ENCODE measurements at regions of chr6 and their contacts with region 1.

Region 1: GRCh38 chr6:47097092-47097945 is 55.2 kb upstream of the ADGRF1 start:
- DNase-seq: peak; percentile 50 to 58
- ATAC-seq: peak; percentile 78 to 93
- H3K4me3 ChIP-seq: no peak overlapping the region
- H3K27ac ChIP-seq: peak overlapping the region in 1 of 4 donors; percentile 40
- H3K4me1 ChIP-seq: no peaks in the 10 kb centered on the region
- H3K27me3 ChIP-seq: no peaks in the 10 kb centered on the region
- CTCF ChIP-seq: peak; percentile 52 to 65 (median 56)
- POLR2A ChIP-seq: no peak

Region 2: GRCh38 chr6:47146428-47147174 is 49.3 kb after region 1 on chr6:
- in situ Hi-C with region 1: no loop called
- intact Hi-C with region 1: no loop called
- DNase-seq: no peak
- ATAC-seq: peak; percentile 28 to 39
- H3K4me3 ChIP-seq: no peak overlapping the region
- H3K27ac ChIP-seq: peak overlapping the region in 2 of 4 donors; percentile 34 to 41
- H3K4me1 ChIP-seq: no peaks in the 10 kb centered on the region
- H3K27me3 ChIP-seq: no peaks in the 10 kb centered on the region
- CTCF ChIP-seq: no peak
- POLR2A ChIP-seq: no peak

Region 3: DNA sequence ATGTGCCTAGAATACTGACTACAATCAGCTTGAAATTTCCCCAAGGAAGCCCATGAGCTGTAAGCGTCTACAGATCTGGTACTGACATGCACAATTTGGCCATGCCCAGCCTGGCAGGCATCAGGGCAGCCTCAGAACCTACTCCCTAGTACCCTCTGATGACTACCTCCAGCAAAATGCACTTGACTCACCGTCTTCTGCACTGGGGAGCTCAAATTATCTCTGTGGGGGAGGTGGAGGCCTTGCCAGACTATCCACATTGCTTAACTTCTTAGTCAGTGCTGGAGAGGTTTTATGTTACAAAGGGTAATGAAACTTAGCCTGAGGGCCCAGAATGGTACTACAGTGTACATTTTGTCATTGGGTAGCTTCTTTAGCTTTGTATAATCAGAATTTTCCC is 70.9 kb after region 1 on chr6:
- in situ Hi-C with region 1: no loop called
- intact Hi-C with region 1: loop called (anchors 2 kb)
- DNase-seq: peak; percentile 70 to 88
- ATAC-seq: peak; percentile 98 to 99
- H3K4me3 ChIP-seq: no peak overlapping the region
- H3K27ac ChIP-seq: peak overlapping the region in 3 of 4 donors; percentile 58 to 72 (median 61)
- H3K4me1 ChIP-seq: peaks cover 7 to 15% of the 10 kb centered on the region in 2 donors
- H3K27me3 ChIP-seq: no peaks in the 10 kb centered on the region
- CTCF ChIP-seq: peak in 1 of 5 experiments; percentile 22
- POLR2A ChIP-seq: no peak

Region 4: DNA sequence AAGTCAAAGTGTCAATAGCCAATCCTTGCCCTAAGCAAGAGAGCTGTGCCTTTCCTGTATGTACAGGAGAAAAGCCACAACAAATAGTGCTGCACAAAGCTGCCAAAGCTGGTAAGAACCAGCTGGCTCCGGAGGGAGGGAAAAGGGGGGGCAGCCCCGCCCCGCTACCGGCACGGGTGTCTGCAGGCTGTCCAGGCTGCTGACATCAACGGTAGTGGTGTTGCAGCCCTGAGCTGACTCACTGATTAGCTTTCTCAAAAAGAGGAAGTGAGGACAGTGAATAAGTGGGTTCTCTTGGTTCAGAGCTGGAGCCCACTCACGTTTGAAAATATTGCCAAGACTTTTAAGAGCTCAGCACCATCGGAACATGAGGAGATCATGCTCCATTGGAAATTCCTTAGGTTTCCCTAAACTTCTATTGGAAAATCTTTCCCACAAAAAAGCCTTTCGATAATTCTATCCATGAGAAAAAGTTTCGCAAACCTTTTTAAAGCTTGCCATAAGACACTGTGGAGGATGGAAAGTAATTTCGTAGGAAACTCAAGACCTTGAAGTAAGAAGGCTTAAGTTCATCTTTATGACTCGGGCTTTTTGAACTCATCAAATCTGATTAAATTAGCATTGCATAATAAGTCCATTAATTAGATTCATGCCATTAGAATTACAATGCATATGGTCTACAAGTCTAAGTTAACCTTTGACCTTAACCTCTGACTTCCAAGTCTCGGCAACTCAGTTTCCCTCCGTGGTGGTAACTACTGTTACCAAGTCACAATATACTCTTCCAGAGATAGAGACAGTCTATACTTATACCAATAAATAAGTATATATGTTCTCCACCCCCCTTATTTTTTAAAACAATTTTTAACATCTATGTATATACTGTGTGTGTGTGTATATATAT is 145.4 kb after region 1 on chr6:
- in situ Hi-C with region 1: loop called in 2 of 4 experiments (anchors 5 to 10 kb)
- intact Hi-C with region 1: loop called (anchors 5 kb)
- DNase-seq: peak; percentile 56 to 76
- ATAC-seq: peak; percentile 63 to 81
- H3K4me3 ChIP-seq: no peak overlapping the region
- H3K27ac ChIP-seq: peak overlapping the region in 3 of 4 donors; percentile 11 to 37 (median 15)
- H3K4me1 ChIP-seq: peaks cover 15 to 17% of the 10 kb centered on the region in 2 donors
- H3K27me3 ChIP-seq: no peaks in the 10 kb centered on the region
- CTCF ChIP-seq: no peak
- POLR2A ChIP-seq: no peak